H1 (cell line): ENCODE measurements at regions of chr15 and their contacts with region 1.

Region 1: DNA sequence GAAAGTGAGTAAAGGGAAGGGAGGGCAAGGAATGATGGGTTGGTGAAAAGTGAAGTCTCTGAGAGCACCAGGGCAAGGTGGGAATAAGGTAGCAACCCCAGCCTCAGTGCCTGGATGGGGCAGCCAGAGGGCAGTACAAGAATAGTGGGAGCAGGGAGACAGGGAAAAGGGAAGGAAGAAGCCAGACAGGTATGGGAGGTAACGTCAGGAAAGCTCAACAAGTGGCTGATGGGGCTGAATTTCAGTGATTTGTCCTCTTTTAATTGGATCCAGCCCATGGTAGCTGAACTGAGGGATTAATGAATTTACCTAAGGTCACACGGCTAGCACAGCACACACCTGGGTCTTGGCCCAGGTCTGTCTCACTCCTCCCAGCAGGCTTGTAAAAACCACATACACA is 12.6 kb downstream of the RORA start:
- DNase-seq: peak in 1 of 2 experiments; percentile 57
- H3K4me3 ChIP-seq: no peak overlapping the region
- H3K27ac ChIP-seq: no peak overlapping the region
- H3K4me1 ChIP-seq: peaks cover 0 to 9% (median 7%) of the 10 kb centered on the region in 4 experiments; a peak in 4 of 7 replicates
- H3K27me3 ChIP-seq: no peaks in the 10 kb centered on the region
- CTCF ChIP-seq: peak; percentile 62 to 85 (median 84)
- EP300 ChIP-seq: no peak
- POLR2A ChIP-seq: no peak
- RAD21 ChIP-seq: peak; percentile 86

Region 2: GRCh38 chr15:61205346-61205921 is 11.1 kb before region 1 on chr15:
- CTCF ChIA-PET with region 1: interaction called, 23 read pairs
- POLR2A ChIA-PET with region 1: no interaction called
- DNase-seq: no peak
- H3K4me3 ChIP-seq: no peak overlapping the region
- H3K27ac ChIP-seq: no peak overlapping the region
- H3K4me1 ChIP-seq: peaks cover 0 to 3% (median 1%) of the 10 kb centered on the region in 4 experiments; a peak in 2 of 7 replicates
- H3K27me3 ChIP-seq: no peaks in the 10 kb centered on the region
- CTCF ChIP-seq: no peak
- EP300 ChIP-seq: no peak
- POLR2A ChIP-seq: no peak
- RAD21 ChIP-seq: no peak

Region 3: DNA sequence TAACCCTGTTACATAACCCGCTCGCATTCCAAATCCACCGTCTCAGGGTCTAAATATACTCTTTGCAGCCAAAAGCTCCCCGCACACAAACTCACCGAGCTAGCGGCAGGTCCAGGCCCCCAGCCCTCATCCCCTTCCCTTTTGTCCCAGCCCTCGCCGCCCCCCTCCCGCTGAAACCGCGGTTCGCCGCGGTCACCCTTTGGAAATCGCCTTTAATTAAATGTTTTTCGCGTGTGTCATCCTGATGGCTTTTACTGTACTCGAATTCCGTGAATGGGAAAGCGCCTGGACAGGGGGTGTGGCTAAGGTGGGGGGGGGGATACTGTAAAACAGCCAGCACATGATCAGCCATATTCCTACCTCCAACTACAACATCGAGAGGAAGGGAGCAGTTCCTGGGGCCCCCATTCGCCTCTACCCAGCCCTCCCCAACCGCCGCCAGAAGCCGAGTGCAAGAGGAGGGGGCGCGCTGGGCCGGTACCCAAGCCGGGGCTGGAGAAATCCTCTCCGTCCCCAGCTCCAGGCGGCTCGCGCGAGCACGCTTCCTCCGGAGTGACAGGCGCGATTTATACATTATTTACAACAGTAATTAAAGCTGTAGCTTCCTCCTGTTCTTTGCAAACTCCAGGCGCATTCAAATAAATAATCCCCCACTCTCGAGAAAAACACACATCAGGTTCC is 10.9 kb after region 1 on chr15:
- CTCF ChIA-PET with region 1: interaction called, 21 read pairs
- POLR2A ChIA-PET with region 1: interaction called, 15 read pairs
- DNase-seq: no peak
- H3K4me3 ChIP-seq: peak overlapping the region; percentile 57 to 75 (median 65)
- H3K27ac ChIP-seq: no peak overlapping the region
- H3K4me1 ChIP-seq: peaks cover 0 to 14% (median 7%) of the 10 kb centered on the region in 4 experiments; a peak in 5 of 7 replicates
- H3K27me3 ChIP-seq: peaks cover 0 to 21% (median 7%) of the 10 kb centered on the region in 4 experiments; a peak in 3 of 7 replicates
- CTCF ChIP-seq: no peak
- EP300 ChIP-seq: no peak
- POLR2A ChIP-seq: no peak
- RAD21 ChIP-seq: no peak